BJ (cell line): ENCODE measurements at regions of chr15 and their contacts with region 1.

Region 1: DNA sequence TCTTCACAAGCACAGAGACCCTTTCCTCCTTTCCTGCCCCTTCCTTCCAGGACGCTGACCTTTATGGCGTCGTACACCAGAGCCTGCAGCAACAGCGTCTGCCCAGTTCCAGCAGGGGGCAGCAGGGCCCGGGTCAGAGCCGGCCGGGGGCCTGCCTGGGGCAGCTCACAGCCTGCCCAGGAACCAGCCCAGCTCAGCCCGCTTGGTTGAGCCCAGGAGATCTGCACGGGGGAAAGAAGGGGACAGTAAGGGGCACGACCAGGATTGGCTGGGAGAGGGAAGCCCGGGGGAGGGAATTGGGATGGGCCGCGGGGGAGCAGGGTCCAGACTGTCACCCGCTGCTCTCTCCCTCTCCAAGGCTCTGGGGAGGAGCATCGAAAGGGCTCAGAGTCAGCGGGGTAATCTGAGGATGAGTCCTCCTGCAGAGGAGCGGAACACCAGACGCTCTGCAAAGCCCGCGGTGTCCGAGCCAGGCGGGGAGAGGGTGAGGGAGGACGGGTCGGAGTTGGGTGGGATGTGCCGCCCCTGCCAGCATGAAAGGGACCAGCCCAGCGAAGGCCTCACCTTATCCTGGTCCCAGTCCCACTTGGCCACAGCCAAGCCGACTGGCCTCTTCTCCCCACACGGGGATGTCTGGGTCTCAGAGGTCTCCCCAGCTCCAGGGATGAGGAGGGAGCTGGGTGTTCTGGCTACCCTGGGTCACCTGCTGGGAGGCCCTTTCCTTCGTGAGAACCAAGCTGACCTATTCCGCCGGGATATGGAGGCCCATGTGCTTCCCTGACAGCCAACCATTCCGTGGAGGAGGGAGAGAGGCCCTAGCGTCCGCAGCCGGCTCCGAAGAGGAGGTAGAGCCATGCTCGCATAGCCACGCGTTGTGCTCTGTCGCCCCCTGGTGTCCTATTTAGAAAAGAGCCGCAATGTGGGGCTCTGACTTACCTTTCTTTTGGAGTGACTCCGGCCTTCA is 7.4 kb upstream of the IGDCC3 start:
- DNase-seq: no peak
- H3K4me3 ChIP-seq: no peak overlapping the region
- H3K27me3 ChIP-seq: peaks cover 5% of the 10 kb centered on the region
- CTCF ChIP-seq: peak; percentile 85

Region 2: DNA sequence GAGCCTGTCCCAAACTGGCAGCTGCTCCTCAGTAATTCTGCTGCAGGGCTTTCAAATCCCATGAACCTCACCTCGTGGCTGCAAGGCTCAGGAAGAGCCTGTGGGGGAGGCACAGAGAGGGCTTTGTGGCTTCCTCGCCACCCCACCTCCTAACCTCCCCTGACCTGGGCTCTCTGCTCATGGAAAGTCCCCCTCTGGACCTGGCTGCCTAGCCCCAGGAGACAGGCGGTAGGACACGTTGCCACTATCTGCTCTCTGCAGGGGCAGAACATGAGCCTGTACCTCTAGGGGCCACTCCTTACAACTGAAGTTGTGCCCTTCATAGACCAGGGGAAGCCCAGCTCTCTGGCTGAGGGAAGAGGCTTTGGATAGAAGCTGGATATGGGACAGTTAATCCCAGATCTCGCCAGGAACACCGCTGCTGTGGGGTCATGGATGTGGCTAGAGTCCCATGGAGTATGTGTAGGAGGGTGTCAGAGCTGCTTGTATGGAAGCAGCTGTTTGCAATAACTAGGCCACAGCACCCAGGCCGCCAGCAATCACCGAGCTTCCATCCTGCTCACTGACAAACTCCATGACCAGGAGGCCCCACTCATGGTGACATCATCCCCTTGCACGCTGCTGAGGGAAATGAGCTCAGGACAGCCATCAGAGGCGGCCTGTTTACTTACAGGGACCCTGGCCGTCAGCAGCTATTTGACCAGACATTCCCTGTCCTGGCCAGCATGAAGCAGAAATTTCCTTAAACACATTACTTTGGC is 139.9 kb before region 1 on chr15:
- CTCF ChIA-PET with region 1: no interaction called
- POLR2A ChIA-PET with region 1: no interaction called
- DNase-seq: no peak
- H3K4me3 ChIP-seq: no peak overlapping the region
- H3K27me3 ChIP-seq: no peaks in the 10 kb centered on the region
- CTCF ChIP-seq: no peak

Region 3: GRCh38 chr15:65312400-65312916 is 72.7 kb before region 1 on chr15:
- CTCF ChIA-PET with region 1: interaction called, 454 read pairs
- POLR2A ChIA-PET with region 1: no interaction called
- DNase-seq: no peak
- H3K4me3 ChIP-seq: no peak overlapping the region
- H3K27me3 ChIP-seq: peaks cover 7% of the 10 kb centered on the region
- CTCF ChIP-seq: no peak

Region 4: DNA sequence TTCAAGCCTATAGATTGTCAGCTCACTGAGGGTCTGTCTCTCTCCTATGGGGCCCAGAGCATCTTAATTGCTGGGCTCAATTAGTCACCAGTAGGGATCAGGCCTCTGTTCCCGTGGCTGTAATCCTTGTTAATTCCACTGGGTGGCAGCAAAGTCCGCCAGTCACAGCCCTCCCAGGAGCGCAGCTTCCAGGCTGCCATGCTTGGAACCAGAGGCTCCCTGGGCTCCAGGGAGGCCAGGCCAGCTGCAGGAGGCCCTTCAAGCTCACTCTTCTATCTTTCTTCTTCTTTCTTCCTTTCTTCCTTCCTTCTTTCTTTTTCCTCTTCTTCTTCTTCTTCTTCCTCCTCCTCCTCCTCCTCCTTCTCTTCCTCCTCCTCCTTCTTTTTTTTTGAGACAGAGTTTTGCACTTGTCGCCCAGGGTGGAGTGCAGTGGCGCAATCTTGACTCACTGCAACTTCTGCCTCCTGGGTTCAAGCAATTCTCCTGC is 66.3 kb before region 1 on chr15:
- CTCF ChIA-PET with region 1: interaction called, 454 read pairs
- POLR2A ChIA-PET with region 1: interaction called, 7 read pairs
- DNase-seq: peak; percentile 16
- H3K4me3 ChIP-seq: no peak overlapping the region
- H3K27me3 ChIP-seq: peaks cover 9% of the 10 kb centered on the region
- CTCF ChIP-seq: peak; percentile 73

Region 5: DNA sequence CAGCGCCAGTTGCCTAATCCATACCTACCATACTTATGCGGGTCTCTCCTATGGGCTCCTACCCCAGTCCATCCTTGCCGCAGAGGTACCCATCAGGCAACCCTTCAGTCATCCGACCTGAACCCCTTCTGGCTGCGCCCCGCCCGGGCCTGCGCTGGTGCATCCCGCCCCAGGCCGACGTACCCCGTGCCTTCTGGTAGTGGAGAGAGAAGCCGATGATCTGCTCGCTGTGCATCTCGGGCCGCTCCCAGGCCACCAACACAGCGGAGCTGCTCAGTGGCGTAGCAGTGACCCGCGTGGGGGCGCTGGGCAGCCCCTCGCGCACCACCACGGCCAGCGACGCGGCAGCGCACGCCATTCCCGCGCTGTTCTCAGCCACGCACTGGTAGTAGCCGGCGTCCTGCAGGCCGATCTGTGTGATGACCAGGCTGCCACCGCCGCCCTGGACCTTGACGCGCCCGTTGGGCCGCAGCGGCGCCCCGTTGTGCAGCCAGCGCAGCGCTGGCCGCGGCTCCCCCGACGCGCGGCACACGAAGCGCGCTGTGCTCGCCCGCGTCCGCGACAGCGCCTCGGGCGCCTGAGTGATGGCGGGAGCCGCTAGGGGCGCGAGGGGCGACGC is 10.5 kb after region 1 on chr15:
- CTCF ChIA-PET with region 1: interaction called, 22 read pairs
- POLR2A ChIA-PET with region 1: no interaction called
- DNase-seq: no peak
- H3K4me3 ChIP-seq: no peak overlapping the region
- H3K27me3 ChIP-seq: peaks cover 6% of the 10 kb centered on the region
- CTCF ChIP-seq: no peak